Mammary epithelial cell (primary cell): ENCODE measurements at regions of chr4 and their contacts with region 1.

Region 1: DNA sequence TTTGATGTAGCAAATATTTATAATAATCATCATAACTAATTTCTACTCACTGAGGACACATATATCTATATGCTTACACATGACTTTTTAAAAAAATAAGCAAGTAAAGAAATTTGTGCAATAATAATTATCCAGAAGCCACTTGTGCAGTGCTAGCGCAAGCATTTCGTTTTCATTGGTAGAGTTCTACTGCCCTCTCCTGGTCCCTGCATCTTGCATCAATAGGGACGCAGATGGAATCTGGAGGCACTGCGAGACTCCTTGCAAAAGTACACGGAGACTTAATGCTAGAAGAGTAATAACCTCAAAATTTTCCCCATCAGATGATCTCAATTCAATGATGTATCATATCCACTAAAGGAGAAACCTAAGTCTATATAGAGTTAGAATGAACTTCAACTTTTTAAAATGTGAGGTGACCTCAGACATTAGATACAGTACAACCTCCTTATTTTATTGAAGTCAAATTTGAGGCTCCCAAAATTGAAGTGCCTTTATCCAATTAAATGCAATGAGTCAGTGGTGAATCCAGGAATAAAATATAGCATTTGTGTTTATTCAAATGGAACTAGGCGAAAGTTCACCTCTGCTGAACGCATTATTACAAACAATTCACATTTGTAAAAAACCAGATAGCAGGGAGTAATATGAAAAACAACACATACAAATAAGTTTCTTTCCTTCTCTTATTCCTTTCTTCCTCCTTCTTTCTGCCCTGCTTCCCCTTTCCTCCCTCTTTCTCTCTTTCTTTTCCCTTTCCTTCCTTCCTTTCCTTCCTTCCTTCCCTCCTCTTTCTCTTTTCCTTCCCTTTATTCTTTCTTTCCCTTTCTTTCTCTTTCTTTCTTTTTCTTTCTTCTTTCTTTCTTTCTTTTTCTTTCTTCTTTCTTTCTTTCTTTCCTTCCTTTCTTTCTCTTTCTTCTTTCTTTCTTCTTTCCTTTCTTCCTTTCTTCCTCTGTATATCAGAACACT is 450.0 kb downstream of the ANKRD50 start:
- DNase-seq: peak; percentile 64
- H3K4me3 ChIP-seq: no peak overlapping the region
- H3K27ac ChIP-seq: no peak overlapping the region
- H3K4me1 ChIP-seq: no peaks in the 10 kb centered on the region
- H3K27me3 ChIP-seq: no peaks in the 10 kb centered on the region
- CTCF ChIP-seq: peak; percentile 90 to 93

Region 2: DNA sequence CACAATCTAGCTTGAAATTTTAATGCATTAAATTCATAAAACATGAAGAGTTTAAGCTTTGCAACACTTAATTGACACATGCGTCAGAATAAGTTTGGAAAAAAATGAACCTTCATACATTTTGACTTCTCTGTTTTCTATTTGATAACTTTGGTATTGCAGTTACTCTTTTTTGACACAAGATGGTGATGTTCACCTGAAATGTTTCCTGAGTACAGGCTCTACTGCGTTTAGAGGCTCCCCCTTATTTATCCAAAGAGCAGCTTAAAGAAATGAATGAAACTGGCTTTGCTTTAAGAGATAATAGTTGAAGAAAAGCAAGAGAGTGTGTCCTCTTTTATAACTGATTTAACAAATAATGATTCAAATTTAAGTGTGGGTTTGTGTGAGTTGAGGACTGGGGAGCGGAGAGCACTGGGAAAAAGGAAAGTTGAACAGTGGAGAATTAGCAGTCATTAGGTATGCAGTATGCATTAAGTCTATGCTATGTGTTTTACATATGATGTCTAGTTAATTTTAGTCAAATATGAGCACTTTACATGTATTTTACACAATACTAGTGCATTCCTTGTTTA is 1159.5 kb before region 1 on chr4:
- CTCF ChIA-PET with region 1: no interaction called
- dilution Hi-C with region 1: no loop called
- in situ Hi-C with region 1: loop called in 1 of 2 experiments (anchors 25 kb)
- intact Hi-C with region 1: loop called (anchors 5 kb)
- DNase-seq: peak; percentile 40
- H3K4me3 ChIP-seq: no peak overlapping the region
- H3K27ac ChIP-seq: no peak overlapping the region
- H3K4me1 ChIP-seq: no peaks in the 10 kb centered on the region
- H3K27me3 ChIP-seq: no peaks in the 10 kb centered on the region
- CTCF ChIP-seq: peak; percentile 60 to 71

Region 3: GRCh38 chr4:123661080-123661737 is 601.3 kb before region 1 on chr4:
- CTCF ChIA-PET with region 1: no interaction called
- dilution Hi-C with region 1: no loop called
- in situ Hi-C with region 1: no loop called
- intact Hi-C with region 1: loop called (anchors 5 kb)
- DNase-seq: no peak
- H3K4me3 ChIP-seq: no peak overlapping the region
- H3K27ac ChIP-seq: no peak overlapping the region
- H3K4me1 ChIP-seq: no peaks in the 10 kb centered on the region
- H3K27me3 ChIP-seq: no peaks in the 10 kb centered on the region
- CTCF ChIP-seq: peak; percentile 60 to 64

Region 4: GRCh38 chr4:123776254-123776653 is 486.2 kb before region 1 on chr4:
- CTCF ChIA-PET with region 1: no interaction called
- dilution Hi-C with region 1: no loop called
- in situ Hi-C with region 1: loop called (anchors 25 kb)
- intact Hi-C with region 1: loop called (anchors 1 kb)
- DNase-seq: no peak
- H3K4me3 ChIP-seq: no peak overlapping the region
- H3K27ac ChIP-seq: no peak overlapping the region
- H3K4me1 ChIP-seq: no peaks in the 10 kb centered on the region
- H3K27me3 ChIP-seq: no peaks in the 10 kb centered on the region
- CTCF ChIP-seq: no peak

Region 5: GRCh38 chr4:124288706-124289483 is 26.4 kb after region 1 on chr4:
- CTCF ChIA-PET with region 1: interaction called, 12 read pairs
- dilution Hi-C with region 1: no loop called
- in situ Hi-C with region 1: no loop called
- intact Hi-C with region 1: no loop called
- DNase-seq: no peak
- H3K4me3 ChIP-seq: no peak overlapping the region
- H3K27ac ChIP-seq: no peak overlapping the region
- H3K4me1 ChIP-seq: peaks cover 5% of the 10 kb centered on the region
- H3K27me3 ChIP-seq: no peaks in the 10 kb centered on the region
- CTCF ChIP-seq: peak in 1 of 2 donors; percentile 4

Region 6: DNA sequence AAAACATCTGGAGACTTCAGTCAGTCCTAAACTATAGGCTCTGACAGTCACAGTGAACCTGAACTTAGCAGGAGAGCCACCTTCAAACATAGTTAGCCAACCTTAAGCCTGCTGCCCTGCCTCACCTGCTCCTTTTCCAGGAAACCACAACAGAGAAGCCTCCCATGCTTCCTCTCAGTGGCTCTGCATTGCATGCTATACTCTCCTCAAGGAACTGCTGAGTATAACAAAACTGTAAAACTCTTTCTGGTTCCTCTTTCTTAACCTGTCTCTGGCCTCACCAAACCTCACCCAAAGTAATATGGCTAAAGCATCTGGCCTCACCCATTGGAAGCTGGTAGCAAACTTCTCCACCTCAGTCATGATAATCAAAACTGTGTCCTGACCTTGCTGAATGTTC is 328.0 kb after region 1 on chr4:
- CTCF ChIA-PET with region 1: no interaction called
- dilution Hi-C with region 1: no loop called
- in situ Hi-C with region 1: no loop called
- intact Hi-C with region 1: no loop called
- DNase-seq: no peak
- H3K4me3 ChIP-seq: no peak overlapping the region
- H3K27ac ChIP-seq: no peak overlapping the region
- H3K4me1 ChIP-seq: no peaks in the 10 kb centered on the region
- H3K27me3 ChIP-seq: no peaks in the 10 kb centered on the region
- CTCF ChIP-seq: no peak

Region 7: DNA sequence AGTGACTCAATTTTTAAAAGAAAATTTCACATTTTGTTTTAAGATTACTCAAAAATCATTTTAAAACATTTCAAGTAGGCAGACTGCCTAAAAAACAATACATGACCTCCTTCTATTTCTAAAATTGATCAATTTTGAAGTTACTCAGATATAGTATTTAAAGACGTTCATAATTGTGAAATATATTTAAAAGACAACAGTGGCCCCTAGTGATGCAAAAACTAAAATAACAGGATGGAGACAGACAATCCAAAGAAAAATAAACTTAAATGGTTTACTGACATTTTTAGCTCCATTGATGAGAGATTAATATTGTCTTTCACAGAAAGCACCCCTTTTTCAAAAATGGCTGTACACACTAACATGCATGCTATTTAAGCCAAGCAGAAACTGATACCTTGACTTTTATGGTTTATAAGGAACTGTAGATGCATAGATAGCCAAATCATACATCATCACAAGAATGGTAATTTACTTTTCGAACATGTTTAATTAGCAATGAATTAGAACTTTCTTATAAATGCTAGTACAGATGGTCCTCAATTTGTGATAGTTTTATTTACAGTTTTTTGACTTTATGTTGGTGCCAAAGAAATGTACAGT is 982.5 kb after region 1 on chr4:
- CTCF ChIA-PET with region 1: no interaction called
- dilution Hi-C with region 1: no loop called
- in situ Hi-C with region 1: no loop called
- intact Hi-C with region 1: loop called (anchors 10 kb)
- DNase-seq: peak; percentile 14
- H3K4me3 ChIP-seq: no peak overlapping the region
- H3K27ac ChIP-seq: no peak overlapping the region
- H3K4me1 ChIP-seq: peaks cover 7% of the 10 kb centered on the region
- H3K27me3 ChIP-seq: no peaks in the 10 kb centered on the region
- CTCF ChIP-seq: peak; percentile 27 to 36